ENCODE measurements at regions of chr5 and their contacts with region 1.

Region 1: GRCh38 chr5:54610197-54610944 is 92.8 kb downstream of the SNX18 start:
- DNase-seq: peak; percentile 73
- ATAC-seq: peak; percentile 91
- H3K4me3 Mint-ChIP-seq: peak overlapping the region; percentile 61
- H3K27ac Mint-ChIP-seq: peak overlapping the region; percentile 93
- H3K4me1 Mint-ChIP-seq: peaks cover 29% of the 10 kb centered on the region
- H3K27me3 Mint-ChIP-seq: no peaks in the 10 kb centered on the region

Region 2: GRCh38 chr5:54646356-54647101 is 36.2 kb after region 1 on chr5:
- CTCF ChIA-PET with region 1: interaction called, 6 read pairs
- POLR2A ChIA-PET with region 1: interaction called, 19 read pairs
- DNase-seq: peak; percentile 92
- ATAC-seq: peak; percentile 97
- H3K4me3 Mint-ChIP-seq: peak overlapping the region; percentile 69
- H3K27ac Mint-ChIP-seq: peak overlapping the region; percentile 96
- H3K4me1 Mint-ChIP-seq: peaks cover 54% of the 10 kb centered on the region
- H3K27me3 Mint-ChIP-seq: no peaks in the 10 kb centered on the region